ENCODE measurements at regions of chr15 and their contacts with region 1.

Region 1: DNA sequence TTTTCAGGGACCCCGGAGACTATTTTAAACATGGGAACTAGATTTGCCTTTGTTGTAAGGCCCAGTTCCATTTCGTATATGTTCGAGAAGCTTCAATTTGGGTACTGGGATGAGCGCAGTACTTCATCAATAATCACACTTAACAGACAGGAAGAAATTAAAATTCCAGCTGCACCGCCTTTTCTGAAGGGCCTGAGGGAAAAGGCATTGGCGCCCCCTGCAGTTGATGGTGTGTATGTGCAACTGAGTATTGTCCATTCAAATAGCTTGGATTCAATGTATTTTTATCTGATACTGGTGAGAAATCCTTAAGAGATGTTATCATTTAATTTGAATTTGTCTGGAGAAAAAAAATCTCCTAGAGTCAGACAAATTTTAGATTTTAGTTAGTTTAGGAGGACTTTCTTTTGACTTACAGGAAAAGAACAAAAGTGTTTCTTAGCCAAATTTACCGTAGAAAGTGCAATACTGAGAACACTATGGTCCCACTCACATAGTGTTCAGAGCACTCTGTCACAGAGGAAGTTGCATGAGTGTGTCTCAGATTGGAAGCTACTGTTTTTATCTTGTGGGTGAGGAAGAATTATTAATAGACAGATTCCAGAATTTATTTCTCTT is 5.4 kb upstream of the ALDH1A2 start:
- DNase-seq: peak; percentile 76
- ATAC-seq: no peak
- H3K4me3 Mint-ChIP-seq: no peak overlapping the region
- H3K27ac Mint-ChIP-seq: no peak overlapping the region
- H3K4me1 Mint-ChIP-seq: peaks cover 3% of the 10 kb centered on the region
- H3K27me3 Mint-ChIP-seq: peaks cover 38% of the 10 kb centered on the region

Region 2: GRCh38 chr15:57732526-57733331 is 338.2 kb before region 1 on chr15:
- CTCF ChIA-PET with region 1: interaction called, 5 read pairs
- POLR2A ChIA-PET with region 1: no interaction called
- intact Hi-C with region 1: loop called in 1 of 2 experiments (anchors 2 kb)
- DNase-seq: peak; percentile 69
- ATAC-seq: peak; percentile 36
- H3K4me3 Mint-ChIP-seq: no peak overlapping the region
- H3K27ac Mint-ChIP-seq: no peak overlapping the region
- H3K4me1 Mint-ChIP-seq: peaks cover 9% of the 10 kb centered on the region
- H3K27me3 Mint-ChIP-seq: no peaks in the 10 kb centered on the region

Region 3: DNA sequence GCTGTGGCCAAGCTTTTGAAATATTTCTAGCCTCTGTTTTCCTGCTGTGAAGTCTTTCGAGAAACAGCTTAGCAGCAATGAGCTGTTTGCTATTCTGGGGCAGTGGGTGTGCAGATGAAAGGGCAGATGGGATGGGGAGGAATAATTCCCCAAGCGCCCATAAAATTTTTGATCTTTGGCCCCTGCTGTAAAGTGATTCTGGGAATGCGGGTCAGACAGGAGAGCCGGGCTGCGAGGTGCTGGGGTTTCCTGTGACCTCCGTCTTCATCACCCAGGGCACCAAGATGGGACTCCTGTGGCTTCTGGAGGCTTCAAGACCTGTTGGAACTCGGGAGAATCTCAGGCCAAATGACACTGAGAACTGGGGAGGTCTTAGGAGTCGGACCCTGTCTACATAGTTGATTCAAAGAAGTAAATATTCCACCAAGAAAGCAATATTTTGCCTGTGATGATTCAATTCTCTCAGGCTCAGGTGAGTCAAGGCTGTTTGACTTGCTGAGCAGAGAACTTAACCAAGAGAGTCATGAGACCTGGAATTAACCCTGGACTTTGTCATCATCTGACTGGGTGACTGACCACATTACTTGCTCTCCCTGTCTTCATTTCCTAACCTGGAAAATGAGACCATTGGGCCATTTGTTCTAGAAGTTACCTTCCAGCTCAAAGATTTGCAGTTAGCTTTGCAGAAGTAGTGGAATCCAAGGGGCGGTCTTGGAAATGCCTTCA is 278.0 kb before region 1 on chr15:
- CTCF ChIA-PET with region 1: no interaction called
- POLR2A ChIA-PET with region 1: no interaction called
- intact Hi-C with region 1: no loop called
- DNase-seq: no peak
- ATAC-seq: no peak
- H3K4me3 Mint-ChIP-seq: no peak overlapping the region
- H3K27ac Mint-ChIP-seq: no peak overlapping the region
- H3K4me1 Mint-ChIP-seq: no peaks in the 10 kb centered on the region
- H3K27me3 Mint-ChIP-seq: peaks cover 3% of the 10 kb centered on the region

Region 4: DNA sequence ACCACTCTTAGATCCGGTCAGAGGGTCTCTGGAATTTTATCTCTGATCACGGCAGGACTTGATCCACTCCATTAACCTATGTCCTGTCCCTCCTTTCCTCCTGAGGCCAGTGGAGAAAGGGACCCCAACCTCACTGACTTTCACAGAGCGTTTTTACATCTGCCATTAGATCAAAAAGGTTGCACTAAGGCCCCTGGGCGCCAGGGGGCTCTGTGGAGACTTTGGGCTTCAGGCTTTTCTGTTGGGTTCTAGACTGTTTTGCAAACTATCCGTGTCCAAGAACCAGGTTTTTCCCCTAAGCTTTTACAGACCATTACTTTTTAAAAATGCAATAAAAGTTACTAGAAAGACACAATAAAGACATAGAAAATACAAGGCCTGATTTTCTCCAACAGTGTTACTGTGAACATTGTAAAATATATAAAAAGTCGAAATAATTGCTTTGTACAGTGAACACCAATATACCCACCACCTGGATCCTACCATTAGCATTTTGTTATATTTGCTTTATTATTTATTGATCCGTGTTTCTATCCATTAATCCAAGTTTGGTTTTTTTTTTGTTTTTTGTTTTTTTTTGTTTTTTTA is 204.7 kb before region 1 on chr15:
- CTCF ChIA-PET with region 1: interaction called, 107 read pairs
- POLR2A ChIA-PET with region 1: no interaction called
- intact Hi-C with region 1: loop called (anchors 1 to 2 kb)
- DNase-seq: peak; percentile 75
- ATAC-seq: no peak
- H3K4me3 Mint-ChIP-seq: no peak overlapping the region
- H3K27ac Mint-ChIP-seq: no peak overlapping the region
- H3K4me1 Mint-ChIP-seq: peaks cover 3% of the 10 kb centered on the region
- H3K27me3 Mint-ChIP-seq: peaks cover 24% of the 10 kb centered on the region

Region 5: GRCh38 chr15:58057559-58057958 is 13.4 kb before region 1 on chr15:
- CTCF ChIA-PET with region 1: interaction called, 26 read pairs
- POLR2A ChIA-PET with region 1: no interaction called
- intact Hi-C with region 1: no loop called
- DNase-seq: no peak
- ATAC-seq: no peak
- H3K4me3 Mint-ChIP-seq: no peak overlapping the region
- H3K27ac Mint-ChIP-seq: no peak overlapping the region
- H3K4me1 Mint-ChIP-seq: no peaks in the 10 kb centered on the region
- H3K27me3 Mint-ChIP-seq: peaks cover 38% of the 10 kb centered on the region

Region 6: DNA sequence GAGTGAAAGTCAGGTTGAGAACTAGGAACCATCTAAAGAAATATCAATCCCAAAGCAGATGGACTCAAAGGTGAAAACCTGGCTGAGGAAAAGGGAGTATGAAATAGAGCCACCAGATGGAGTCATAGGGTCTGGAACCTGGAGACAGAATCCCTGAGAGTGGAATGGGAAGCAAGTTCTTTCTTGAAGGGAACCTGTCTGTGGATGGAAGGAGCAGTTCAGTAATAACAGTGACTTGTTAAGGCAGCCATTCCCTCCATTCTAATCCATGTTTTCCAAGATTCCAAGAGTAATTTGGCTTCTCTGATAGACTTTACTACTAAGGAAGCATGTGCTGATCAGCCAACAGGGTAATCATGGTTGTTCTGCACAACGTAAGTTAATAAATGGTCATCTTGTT is 44.8 kb after region 1 on chr15:
- CTCF ChIA-PET with region 1: no interaction called
- POLR2A ChIA-PET with region 1: no interaction called
- intact Hi-C with region 1: no loop called
- DNase-seq: no peak
- ATAC-seq: no peak
- H3K4me3 Mint-ChIP-seq: no peak overlapping the region
- H3K27ac Mint-ChIP-seq: no peak overlapping the region
- H3K4me1 Mint-ChIP-seq: no peaks in the 10 kb centered on the region
- H3K27me3 Mint-ChIP-seq: peaks cover 11% of the 10 kb centered on the region

Region 7: DNA sequence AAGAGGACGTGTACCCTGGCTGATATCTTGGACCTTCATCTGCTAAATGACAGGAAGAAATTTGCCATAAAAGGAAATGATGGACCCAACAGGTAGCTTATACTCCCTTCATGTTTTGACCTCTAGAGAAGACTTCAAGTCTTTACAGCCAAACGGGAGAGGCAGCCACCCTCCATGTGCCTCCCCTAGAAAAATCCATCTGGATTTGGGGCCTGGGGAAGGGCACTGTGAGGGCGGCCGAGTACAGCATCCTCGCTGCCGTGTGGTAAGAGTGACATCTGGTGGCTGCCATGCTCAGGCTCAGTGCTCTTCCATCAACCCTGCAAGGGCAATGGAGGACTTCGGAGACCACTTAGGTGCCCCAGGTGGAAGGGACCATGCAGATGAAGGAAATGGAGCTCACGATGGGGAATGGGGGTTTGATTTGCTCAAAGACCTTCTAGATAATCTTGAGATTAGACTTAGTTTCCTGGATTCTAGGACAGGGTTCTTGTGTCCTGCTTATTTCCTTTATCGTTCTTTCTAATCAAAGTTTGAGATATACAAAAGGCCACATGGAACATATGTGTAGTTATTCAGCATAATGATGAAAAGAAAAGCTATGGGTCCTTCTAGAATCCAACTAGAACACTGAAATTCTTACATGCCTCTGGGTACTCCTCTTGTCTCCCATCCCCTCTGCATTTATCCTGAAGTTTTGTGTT is 111.7 kb after region 1 on chr15:
- CTCF ChIA-PET with region 1: interaction called, 19 read pairs
- POLR2A ChIA-PET with region 1: no interaction called
- intact Hi-C with region 1: loop called (anchors 2 to 5 kb)
- DNase-seq: peak; percentile 63
- ATAC-seq: peak; percentile 65
- H3K4me3 Mint-ChIP-seq: no peak overlapping the region
- H3K27ac Mint-ChIP-seq: no peak overlapping the region
- H3K4me1 Mint-ChIP-seq: peaks cover 6% of the 10 kb centered on the region
- H3K27me3 Mint-ChIP-seq: peaks cover 23% of the 10 kb centered on the region

Region 8: DNA sequence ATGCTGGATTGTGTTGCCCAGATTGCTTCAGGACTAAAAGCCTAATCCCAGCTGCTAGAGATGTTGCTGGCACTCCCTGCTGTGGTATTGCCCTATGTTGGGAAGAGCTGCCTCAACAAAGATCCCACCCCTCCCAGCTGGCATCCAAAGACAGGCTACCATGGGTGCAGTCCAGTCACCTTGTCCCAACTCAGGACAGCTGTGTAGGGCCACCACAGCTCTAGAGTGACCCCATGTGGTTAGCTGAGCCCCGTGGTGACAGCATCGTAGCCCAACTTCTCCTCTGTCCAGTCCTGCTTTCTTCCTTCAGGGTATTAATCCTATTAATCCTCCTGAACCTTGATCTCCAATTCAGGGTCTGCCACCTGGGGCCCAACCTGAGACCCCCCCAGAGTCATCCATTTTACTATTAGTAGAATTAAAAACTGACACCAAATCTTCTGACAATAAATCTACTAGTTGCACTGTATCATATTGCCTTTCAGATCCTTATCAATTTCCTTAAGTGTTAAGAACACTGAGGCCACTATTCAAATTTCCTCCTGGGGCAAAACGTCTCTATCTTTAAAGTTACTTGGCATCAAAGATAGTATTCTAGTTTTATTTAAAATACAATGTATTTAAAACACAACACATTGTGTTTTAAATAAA is 150.8 kb after region 1 on chr15:
- CTCF ChIA-PET with region 1: no interaction called
- POLR2A ChIA-PET with region 1: no interaction called
- intact Hi-C with region 1: no loop called
- DNase-seq: peak; percentile 27
- ATAC-seq: no peak
- H3K4me3 Mint-ChIP-seq: no peak overlapping the region
- H3K27ac Mint-ChIP-seq: no peak overlapping the region
- H3K4me1 Mint-ChIP-seq: no peaks in the 10 kb centered on the region
- H3K27me3 Mint-ChIP-seq: peaks cover 3% of the 10 kb centered on the region

Region 9: GRCh38 chr15:58627046-58627445 is 556.1 kb after region 1 on chr15:
- CTCF ChIA-PET with region 1: no interaction called
- POLR2A ChIA-PET with region 1: no interaction called
- intact Hi-C with region 1: no loop called
- DNase-seq: no peak
- ATAC-seq: no peak
- H3K4me3 Mint-ChIP-seq: peak overlapping the region; percentile 68
- H3K27ac Mint-ChIP-seq: peak overlapping the region; percentile 94
- H3K4me1 Mint-ChIP-seq: peaks cover 40% of the 10 kb centered on the region
- H3K27me3 Mint-ChIP-seq: no peaks in the 10 kb centered on the region